ENCODE measurements at regions of chr15 and their contacts with region 1.

Region 1: GRCh38 chr15:94395640-94396039 is 164.3 kb downstream of the MCTP2 start:
- DNase-seq: no peak
- H3K4me3 ChIP-seq: no peak overlapping the region
- H3K27ac ChIP-seq: no peak overlapping the region
- H3K4me1 ChIP-seq: no peaks in the 10 kb centered on the region
- H3K27me3 ChIP-seq: no peaks in the 10 kb centered on the region
- CTCF ChIP-seq: no peak
- POLR2A ChIP-seq: no peak

Region 2: DNA sequence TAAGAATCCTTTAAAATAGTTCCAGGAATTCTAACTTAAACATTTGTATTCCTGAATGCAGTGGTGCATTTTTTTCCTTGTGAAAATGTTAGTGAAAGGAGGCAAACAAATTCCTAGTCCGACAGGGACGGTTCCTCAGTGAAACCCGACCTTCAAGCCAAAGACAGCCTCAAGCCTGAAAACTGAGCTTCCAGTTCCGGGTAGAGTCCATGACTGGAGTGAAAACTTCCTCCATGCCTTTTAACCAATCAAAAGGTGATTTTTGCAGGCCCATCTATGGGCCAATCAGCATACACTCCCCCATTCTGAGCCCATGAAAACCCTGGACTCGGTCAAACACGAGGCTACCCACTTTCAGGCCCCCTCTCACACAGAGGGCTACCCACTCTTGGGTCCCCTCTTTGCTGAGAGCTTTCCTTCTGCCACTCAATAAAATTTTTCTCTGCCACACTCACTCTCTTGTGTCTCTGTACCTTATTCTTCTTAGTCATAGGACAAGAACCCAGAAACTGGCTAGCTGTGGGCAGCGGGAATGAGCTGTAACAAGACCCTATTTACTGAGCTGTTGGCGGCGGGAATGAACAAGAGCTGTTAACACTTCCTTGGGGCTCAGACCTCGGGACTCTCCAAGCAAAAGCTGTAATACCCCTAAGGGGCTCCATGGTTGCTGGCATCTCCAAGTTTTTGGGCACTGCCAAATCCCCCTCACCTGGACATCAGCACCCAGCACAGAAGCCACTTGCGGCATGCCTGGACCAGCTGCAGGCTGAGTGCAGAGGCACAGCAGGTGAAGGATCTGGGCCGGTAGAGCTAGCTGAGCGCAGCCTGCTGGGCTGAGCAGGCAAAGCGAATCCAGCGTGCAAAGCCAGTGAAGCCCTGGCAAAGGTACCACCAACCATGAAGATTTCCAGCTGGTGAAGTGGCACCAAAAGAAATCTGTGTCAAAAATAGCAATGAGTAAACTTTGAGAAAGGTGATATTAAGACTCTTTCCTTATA is 434.5 kb after region 1 on chr15:
- intact Hi-C with region 1: no loop called
- DNase-seq: no peak
- H3K4me3 ChIP-seq: no peak overlapping the region
- H3K27ac ChIP-seq: no peak overlapping the region
- H3K4me1 ChIP-seq: no peaks in the 10 kb centered on the region
- H3K27me3 ChIP-seq: no peaks in the 10 kb centered on the region
- CTCF ChIP-seq: no peak
- POLR2A ChIP-seq: no peak

Region 3: GRCh38 chr15:95674031-95674430 is 1278.4 kb after region 1 on chr15:
- intact Hi-C with region 1: loop called (anchors 5 kb)
- DNase-seq: no peak
- H3K4me3 ChIP-seq: no peak overlapping the region
- H3K27ac ChIP-seq: no peak overlapping the region
- H3K4me1 ChIP-seq: no peaks in the 10 kb centered on the region
- H3K27me3 ChIP-seq: no peaks in the 10 kb centered on the region
- CTCF ChIP-seq: no peak
- POLR2A ChIP-seq: no peak

Measured in breast epithelium (tissue), 4 donors.